Cardiac septum (tissue), 1 donor: ENCODE measurements at regions of chr1 and their contacts with region 1.

Region 1: GRCh38 chr1:163315773-163316374 is 5.9 kb upstream of the NUF2 start:
- DNase-seq: no peak

Region 2: GRCh38 chr1:162847839-162848453 is 467.9 kb before region 1 on chr1:
- intact Hi-C with region 1: loop called (anchors 2 kb)
- DNase-seq: peak; percentile 83

Region 3: DNA sequence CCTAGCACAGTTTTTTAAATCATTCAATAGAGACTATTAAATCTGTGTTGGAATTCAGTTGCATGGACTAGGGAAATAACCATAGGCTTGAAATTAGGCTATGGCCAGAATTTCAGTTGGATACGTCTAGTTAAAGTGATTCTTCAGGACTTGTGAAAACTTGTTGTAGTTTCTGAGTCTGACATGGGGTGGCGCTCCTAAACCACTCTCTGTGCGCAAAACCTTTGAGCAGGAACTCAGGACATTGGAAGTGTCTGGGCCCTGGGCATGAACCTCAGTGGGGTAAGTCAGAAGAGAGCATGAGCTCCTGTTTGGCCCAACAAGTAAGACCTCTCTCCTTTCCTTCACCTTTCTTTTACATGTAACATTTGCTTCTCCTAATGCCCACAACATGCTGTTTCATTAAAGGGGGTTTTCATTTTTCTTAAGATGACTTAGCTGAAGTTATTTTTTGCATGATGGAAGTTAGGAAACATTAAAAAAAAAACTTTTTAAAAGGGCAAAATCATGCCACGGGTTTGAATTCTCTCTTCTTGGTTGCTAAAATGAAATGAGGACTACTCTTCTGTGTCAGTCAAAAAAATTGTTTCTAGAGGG is 437.8 kb before region 1 on chr1:
- intact Hi-C with region 1: loop called (anchors 5 kb)
- DNase-seq: no peak

Region 4: DNA sequence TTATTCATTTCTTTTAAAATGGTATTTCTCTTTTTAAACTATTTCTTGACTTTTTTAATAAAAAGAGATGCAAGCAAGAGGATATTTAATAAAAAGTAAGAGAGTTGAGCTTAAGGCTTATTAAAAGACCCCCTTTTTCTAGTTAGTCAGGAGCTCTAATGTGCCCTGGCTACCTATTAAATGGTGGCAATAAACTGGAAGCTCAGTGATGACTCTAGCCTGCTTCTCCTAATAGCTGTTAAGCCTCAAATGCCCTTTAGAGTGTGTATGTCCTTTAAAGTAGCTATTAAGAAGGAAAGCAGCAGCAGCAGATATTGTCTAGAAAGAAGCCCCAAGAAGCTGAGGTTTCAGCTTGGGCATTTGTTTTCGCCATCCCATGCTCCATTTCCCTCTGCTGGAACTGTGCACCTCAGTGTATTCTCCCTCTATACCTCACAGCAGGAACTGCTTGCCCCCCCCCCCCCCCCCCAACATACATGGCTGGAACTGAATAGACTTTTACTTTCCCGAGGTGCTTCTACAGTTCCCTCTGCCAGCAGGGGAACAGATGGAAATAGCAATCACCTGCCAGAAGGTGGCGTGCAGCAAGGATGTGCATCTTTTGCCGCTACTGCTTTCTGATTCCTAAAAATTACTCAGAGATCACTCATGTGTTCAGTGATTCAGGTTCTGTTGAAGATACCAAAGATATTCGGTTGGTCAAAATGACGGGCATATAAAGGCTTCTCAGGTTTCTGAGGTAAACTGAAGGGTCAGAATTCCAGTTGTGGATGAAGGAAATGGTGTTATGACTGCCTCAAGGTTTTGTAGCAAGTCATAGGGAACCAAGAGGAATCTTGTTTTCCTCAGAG is 244.2 kb before region 1 on chr1:
- intact Hi-C with region 1: loop called (anchors 2 kb)
- DNase-seq: no peak

Region 5: GRCh38 chr1:163106364-163106987 is 209.4 kb before region 1 on chr1:
- intact Hi-C with region 1: no loop called
- DNase-seq: no peak

Region 6: GRCh38 chr1:163174524-163175437 is 141.1 kb before region 1 on chr1:
- intact Hi-C with region 1: loop called (anchors 5 kb)
- DNase-seq: peak; percentile 77

Region 7: DNA sequence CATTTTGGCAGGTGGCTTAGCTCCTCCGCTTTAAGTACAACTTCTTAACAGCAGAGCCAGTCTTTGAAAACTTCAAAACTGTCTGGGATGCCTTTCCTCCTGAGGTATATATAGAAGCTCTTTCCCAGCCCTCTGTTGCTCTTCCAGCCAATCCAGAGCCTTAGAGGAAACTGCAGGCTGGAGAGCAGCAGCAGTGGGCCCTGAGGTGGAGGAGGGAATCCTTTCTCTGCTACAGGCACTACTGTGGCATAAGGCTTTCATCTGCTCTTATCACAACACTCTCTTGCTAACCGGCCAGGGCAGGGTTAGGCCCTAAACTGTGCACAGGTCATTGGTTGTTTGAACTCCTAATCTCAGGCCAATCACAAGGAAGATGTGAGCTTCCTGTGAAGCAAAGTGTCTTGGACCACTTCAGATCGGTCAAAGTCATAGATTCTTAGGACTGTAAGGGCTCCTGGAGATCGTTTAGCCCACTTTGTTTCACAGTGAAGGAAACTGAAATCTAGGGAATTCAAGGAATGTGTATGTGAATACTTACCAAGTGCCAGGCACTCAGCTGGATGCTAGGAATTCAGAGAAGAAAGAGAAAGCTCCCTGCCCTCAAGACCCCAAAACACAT is 112.9 kb before region 1 on chr1 and contains the start of gene RGS5:
- intact Hi-C with region 1: loop called (anchors 10 kb)
- DNase-seq: no peak
- total RNA-seq, gene RGS5: 223 TPM